Activated CD4-positive, alpha-beta memory T cell treated with anti-CD3 and anti-CD28 coated beads for 36 hours (primary cell): ENCODE measurements at regions of chr10 and their contacts with region 1.

Region 1: GRCh38 chr10:67788025-67788886 is 49.7 kb downstream of the DNAJC12 start:
- DNase-seq: peak; percentile 91
- H3K4me3 Mint-ChIP-seq: no peak overlapping the region
- H3K27ac Mint-ChIP-seq: peak overlapping the region; percentile 11
- H3K4me1 Mint-ChIP-seq: peaks cover 57% of the 10 kb centered on the region
- H3K27me3 Mint-ChIP-seq: no peaks in the 10 kb centered on the region

Region 2: GRCh38 chr10:67650558-67650957 is 137.7 kb before region 1 on chr10:
- CTCF ChIA-PET with region 1: no interaction called
- POLR2A ChIA-PET with region 1: no interaction called
- intact Hi-C with region 1: no loop called
- DNase-seq: no peak
- H3K4me3 Mint-ChIP-seq: no peak overlapping the region
- H3K27ac Mint-ChIP-seq: no peak overlapping the region
- H3K4me1 Mint-ChIP-seq: no peaks in the 10 kb centered on the region
- H3K27me3 Mint-ChIP-seq: no peaks in the 10 kb centered on the region

Region 3: DNA sequence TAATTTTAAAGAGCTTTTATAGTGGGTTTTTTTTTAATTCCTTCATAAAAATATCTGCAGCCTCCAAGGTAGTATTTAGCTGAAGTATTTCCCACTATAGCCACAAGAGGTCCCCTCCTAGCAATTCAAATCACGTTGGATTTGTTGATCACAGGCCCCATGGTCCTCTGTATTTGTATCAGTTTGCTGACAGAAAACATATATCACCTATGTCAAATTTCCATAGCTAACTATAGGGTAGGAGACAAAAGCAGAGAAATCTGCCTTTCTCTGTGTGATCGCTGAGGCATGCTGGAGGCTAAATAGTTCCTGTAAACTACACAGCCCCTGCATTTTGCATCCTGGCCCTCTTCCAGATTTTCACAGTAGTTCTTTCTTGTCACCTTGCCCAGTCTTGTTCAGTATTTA is 90.5 kb before region 1 on chr10:
- CTCF ChIA-PET with region 1: interaction called, 33 read pairs
- POLR2A ChIA-PET with region 1: no interaction called
- intact Hi-C with region 1: no loop called
- DNase-seq: no peak
- H3K4me3 Mint-ChIP-seq: no peak overlapping the region
- H3K27ac Mint-ChIP-seq: no peak overlapping the region
- H3K4me1 Mint-ChIP-seq: peaks cover 9% of the 10 kb centered on the region
- H3K27me3 Mint-ChIP-seq: peaks cover 12% of the 10 kb centered on the region

Region 4: DNA sequence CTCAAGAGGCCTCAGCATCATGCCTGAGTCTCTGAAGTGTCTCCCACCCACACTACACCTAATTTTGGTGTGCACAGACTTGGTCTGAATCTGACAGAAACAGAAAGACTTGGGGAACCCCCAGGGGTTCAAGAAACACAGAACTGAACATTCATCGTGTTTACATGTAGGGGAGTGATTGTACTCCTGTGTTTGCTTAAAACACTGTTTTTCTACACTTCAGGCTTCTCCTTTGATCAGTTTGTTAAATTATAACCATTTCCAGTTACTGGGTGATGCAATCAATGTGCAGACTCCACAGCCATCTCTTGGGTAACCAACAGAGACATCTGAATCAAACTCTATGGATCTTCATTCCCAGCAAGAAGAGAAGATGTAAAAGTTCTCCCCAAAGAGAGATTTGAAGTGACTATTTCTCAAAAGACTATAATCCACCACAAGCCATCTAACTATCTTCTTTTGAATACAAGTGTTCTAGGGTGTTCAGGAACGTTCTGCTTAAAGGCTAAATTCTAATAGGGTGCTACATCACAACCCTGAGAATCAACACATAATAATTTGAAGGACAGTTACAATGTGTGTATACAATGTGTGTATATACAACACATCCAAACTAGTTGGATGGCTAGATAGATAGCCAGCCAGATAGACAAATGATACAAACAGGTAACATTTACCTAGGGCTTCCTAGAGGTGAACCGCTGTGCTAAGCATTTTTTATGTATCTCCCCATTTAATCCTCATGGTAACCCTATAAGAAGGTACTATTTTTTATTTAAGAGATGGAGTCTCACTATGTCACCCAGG is 15.5 kb after region 1 on chr10:
- CTCF ChIA-PET with region 1: interaction called, 22 read pairs
- POLR2A ChIA-PET with region 1: interaction called, 3 read pairs
- intact Hi-C with region 1: loop called (anchors 1 kb)
- DNase-seq: peak; percentile 56
- H3K4me3 Mint-ChIP-seq: no peak overlapping the region
- H3K27ac Mint-ChIP-seq: peak overlapping the region; percentile 92
- H3K4me1 Mint-ChIP-seq: peaks cover 26% of the 10 kb centered on the region
- H3K27me3 Mint-ChIP-seq: peaks cover 2% of the 10 kb centered on the region

Region 5: DNA sequence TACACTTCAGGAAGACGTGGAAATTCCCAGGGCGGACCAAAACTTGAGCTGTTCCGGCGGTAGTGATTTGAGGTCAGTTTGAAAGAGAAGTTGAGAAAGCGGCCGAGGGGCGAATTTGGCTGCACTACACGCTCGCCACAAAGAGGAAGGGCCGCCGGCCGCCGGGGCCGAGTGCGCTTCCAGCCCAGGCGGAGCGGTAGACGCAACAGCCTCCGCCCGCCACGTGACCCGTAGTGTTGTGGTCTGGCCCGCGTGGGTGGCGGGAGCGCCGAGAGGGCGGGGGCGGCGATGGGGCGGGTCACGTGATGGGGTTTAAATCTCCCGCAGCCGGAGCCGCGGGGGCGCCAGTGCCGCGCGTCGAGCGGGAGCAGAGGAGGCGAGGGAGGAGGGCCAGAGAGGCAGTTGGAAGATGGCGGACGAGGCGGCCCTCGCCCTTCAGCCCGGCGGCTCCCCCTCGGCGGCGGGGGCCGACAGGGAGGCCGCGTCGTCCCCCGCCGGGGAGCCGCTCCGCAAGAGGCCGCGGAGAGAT is 96.1 kb after region 1 on chr10 and contains the start of gene SIRT1:
- CTCF ChIA-PET with region 1: interaction called, 13 read pairs
- POLR2A ChIA-PET with region 1: interaction called, 3 read pairs
- intact Hi-C with region 1: no loop called
- DNase-seq: peak; percentile 93
- H3K4me3 Mint-ChIP-seq: peak within 1 kb of the TSS; percentile 93
- H3K27ac Mint-ChIP-seq: peak within 1 kb of the TSS; percentile 88
- H3K4me1 Mint-ChIP-seq: peaks cover 28% of the 10 kb centered on the region
- H3K27me3 Mint-ChIP-seq: no peaks in the 10 kb centered on the region
- total RNA-seq, gene SIRT1: 29.9 to 32.0 TPM

Region 6: GRCh38 chr10:68156373-68157185 is 368.3 kb after region 1 on chr10:
- CTCF ChIA-PET with region 1: interaction called, 96 read pairs
- POLR2A ChIA-PET with region 1: no interaction called
- intact Hi-C with region 1: loop called (anchors 1 kb)
- DNase-seq: peak; percentile 64
- H3K4me3 Mint-ChIP-seq: no peak overlapping the region
- H3K27ac Mint-ChIP-seq: no peak overlapping the region
- H3K4me1 Mint-ChIP-seq: peaks cover 1% of the 10 kb centered on the region
- H3K27me3 Mint-ChIP-seq: peaks cover 2% of the 10 kb centered on the region

Region 7: DNA sequence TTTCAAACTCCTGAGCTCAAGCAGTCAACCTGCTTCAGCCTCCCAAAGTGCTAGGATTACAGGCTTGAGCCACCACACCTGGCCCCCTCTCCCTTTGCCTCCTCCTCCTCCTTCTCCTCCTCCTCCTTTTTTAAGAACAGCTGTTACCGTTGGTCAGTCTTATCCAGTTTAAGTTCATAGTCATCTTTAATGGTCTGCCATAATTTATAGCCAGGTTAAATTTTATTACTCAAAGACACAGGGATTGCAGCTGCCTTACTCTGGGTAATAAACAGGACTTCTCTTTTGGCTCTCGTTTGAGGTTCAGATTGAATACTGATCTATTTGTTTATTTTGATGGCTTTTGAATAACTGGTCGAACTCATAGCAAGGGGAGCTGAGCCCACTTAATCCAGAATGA is 408.4 kb after region 1 on chr10:
- CTCF ChIA-PET with region 1: no interaction called
- POLR2A ChIA-PET with region 1: no interaction called
- intact Hi-C with region 1: no loop called
- DNase-seq: no peak
- H3K4me3 Mint-ChIP-seq: no peak overlapping the region
- H3K27ac Mint-ChIP-seq: no peak overlapping the region
- H3K4me1 Mint-ChIP-seq: no peaks in the 10 kb centered on the region
- H3K27me3 Mint-ChIP-seq: peaks cover 29% of the 10 kb centered on the region

Region 8: GRCh38 chr10:68301790-68302502 is 513.7 kb after region 1 on chr10:
- CTCF ChIA-PET with region 1: interaction called, 39 read pairs
- POLR2A ChIA-PET with region 1: no interaction called
- intact Hi-C with region 1: loop called (anchors 5 kb)
- DNase-seq: no peak
- H3K4me3 Mint-ChIP-seq: no peak overlapping the region
- H3K27ac Mint-ChIP-seq: no peak overlapping the region
- H3K4me1 Mint-ChIP-seq: no peaks in the 10 kb centered on the region
- H3K27me3 Mint-ChIP-seq: no peaks in the 10 kb centered on the region